ENCODE measurements at regions of chr7 and their contacts with region 1.

Region 1: DNA sequence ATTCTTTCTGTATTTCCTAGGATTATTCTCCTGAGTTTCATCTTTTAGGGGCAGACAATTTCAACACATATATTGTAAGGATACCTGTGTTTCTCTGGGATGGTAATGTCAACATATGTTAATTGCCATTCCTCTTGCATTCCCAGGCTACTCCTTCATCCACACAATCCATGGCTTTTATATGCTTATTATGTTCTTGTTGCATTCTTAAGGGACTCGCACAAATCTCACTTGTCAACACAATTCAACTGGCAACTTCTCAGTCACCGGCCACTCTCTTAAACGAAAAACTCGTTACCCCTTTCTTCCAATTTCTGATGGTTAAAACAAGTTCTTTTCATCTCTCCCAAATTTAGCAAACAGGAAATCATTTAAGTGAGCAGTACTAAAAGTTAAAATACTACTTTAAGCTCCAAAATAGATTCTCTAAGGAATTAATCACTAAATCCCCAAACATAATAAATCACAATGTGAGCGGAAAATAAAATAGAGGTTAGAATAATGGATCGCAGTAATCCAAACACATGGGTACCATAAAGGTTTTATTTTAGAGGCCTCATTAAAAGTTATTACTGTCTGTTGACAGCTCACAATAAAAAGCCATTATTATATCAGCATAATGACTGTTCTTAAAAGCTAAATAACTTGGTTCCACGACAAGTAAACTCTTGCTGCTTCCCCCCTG is 223.2 kb downstream of the ELMO1 start:
- DNase-seq: no peak
- ATAC-seq: no peak
- H3K4me3 ChIP-seq: no peak overlapping the region
- H3K27ac ChIP-seq: no peak overlapping the region
- H3K4me1 ChIP-seq: no peaks in the 10 kb centered on the region
- H3K27me3 ChIP-seq: no peaks in the 10 kb centered on the region

Region 2: GRCh38 chr7:36923943-36924436 is 301.4 kb before region 1 on chr7:
- intact Hi-C with region 1: no loop called
- DNase-seq: no peak
- ATAC-seq: peak in 1 of 2 donors; percentile 40
- H3K4me3 ChIP-seq: no peak overlapping the region
- H3K27ac ChIP-seq: no peak overlapping the region
- H3K4me1 ChIP-seq: peaks cover 2% of the 10 kb centered on the region
- H3K27me3 ChIP-seq: no peaks in the 10 kb centered on the region

Region 3: GRCh38 chr7:37504801-37505200 is 279.4 kb after region 1 on chr7:
- intact Hi-C with region 1: loop called in 1 of 4 experiments (anchors 10 kb)
- DNase-seq: no peak
- ATAC-seq: no peak
- H3K4me3 ChIP-seq: no peak overlapping the region
- H3K27ac ChIP-seq: no peak overlapping the region
- H3K4me1 ChIP-seq: no peaks in the 10 kb centered on the region
- H3K27me3 ChIP-seq: no peaks in the 10 kb centered on the region

Measured in right cardiac atrium (tissue), 5 donors.